ENCODE measurements at regions of chr2 and their contacts with region 1.

Region 1: DNA sequence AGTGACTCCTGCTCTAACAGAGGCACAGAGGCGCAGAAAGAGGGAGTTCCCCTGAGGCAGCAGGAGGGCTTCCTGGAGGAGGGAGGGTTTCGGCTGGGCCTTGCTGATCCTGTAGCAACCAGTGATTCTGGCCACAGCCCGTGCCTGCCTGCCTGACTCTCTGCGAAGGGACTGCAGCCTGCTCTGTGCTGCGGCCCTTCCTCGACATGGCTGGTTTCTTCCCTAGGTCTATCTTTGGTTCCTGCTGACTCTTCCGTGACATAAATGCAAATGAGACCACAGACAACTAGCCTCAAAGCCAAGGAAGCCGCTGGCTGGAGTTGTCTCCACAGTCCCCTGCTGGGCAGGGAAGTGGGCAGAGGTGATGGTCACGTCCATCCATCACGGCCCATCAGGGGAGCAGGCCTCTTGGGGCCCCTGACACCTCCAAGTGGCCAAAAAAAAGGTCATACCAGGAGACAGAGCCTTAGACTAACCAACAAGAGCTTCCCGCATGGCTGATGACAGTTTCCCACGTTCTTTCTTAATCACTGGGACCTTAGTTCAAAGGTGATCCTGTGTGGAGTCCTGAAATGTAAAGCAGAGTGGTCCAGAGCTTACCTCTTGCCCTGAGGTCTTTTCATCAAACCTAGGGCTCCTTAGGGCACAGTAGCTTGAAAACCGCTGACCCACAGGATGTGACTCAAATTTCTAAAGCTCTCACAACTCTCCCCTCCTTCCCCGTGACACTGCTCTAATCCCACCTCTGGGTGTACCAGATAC is 55.3 kb downstream of the HS1BP3 start:
- DNase-seq: peak; percentile 66
- ATAC-seq: no peak
- H3K4me3 ChIP-seq: no peak overlapping the region
- H3K27ac ChIP-seq: peak overlapping the region; percentile 97
- H3K4me1 ChIP-seq: peaks cover 98% of the 10 kb centered on the region
- H3K27me3 ChIP-seq: no peaks in the 10 kb centered on the region; a peak in 1 of 5 replicates
- CTCF ChIP-seq: no peak
- EP300 ChIP-seq: peak in 1 of 2 experiments; percentile 62; a peak in 1 of 4 replicates
- POLR2A ChIP-seq: peak in 1 of 2 experiments; percentile 4; a peak in 1 of 4 replicates
- RAD21 ChIP-seq: peak; percentile 33; the same call in 1 of the 2 replicates

Region 2: GRCh38 chr2:20164061-20164733 is 431.4 kb before region 1 on chr2:
- CTCF ChIA-PET with region 1: no interaction called
- POLR2A ChIA-PET with region 1: no interaction called
- in situ Hi-C with region 1: no loop called
- intact Hi-C with region 1: no loop called
- DNase-seq: no peak
- ATAC-seq: peak; percentile 70
- H3K4me3 ChIP-seq: no peak overlapping the region
- H3K27ac ChIP-seq: no peak overlapping the region
- H3K4me1 ChIP-seq: peaks cover 33% of the 10 kb centered on the region
- H3K27me3 ChIP-seq: 0 out of 5 replicates have a peak, but pooled peaks cover 0 to 1% of the 10 kb centered on the region in 2 experiments
- CTCF ChIP-seq: no peak
- EP300 ChIP-seq: no peak
- POLR2A ChIP-seq: no peak
- RAD21 ChIP-seq: no peak

Region 3: GRCh38 chr2:20507166-20507692 is 88.4 kb before region 1 on chr2:
- CTCF ChIA-PET with region 1: no interaction called
- POLR2A ChIA-PET with region 1: interaction called, 15 read pairs
- in situ Hi-C with region 1: no loop called
- intact Hi-C with region 1: no loop called
- DNase-seq: no peak
- ATAC-seq: peak; percentile 55
- H3K4me3 ChIP-seq: no peak overlapping the region
- H3K27ac ChIP-seq: peak overlapping the region; percentile 14
- H3K4me1 ChIP-seq: peaks cover 71% of the 10 kb centered on the region
- H3K27me3 ChIP-seq: no peaks in the 10 kb centered on the region
- CTCF ChIP-seq: no peak
- EP300 ChIP-seq: no peak
- POLR2A ChIP-seq: no peak
- RAD21 ChIP-seq: no peak

Region 4: GRCh38 chr2:20578895-20579825 is 16.5 kb before region 1 on chr2:
- CTCF ChIA-PET with region 1: interaction called, 4 read pairs
- POLR2A ChIA-PET with region 1: interaction called, 409 read pairs
- in situ Hi-C with region 1: no loop called
- intact Hi-C with region 1: loop called (anchors 1 kb)
- DNase-seq: peak; percentile 100
- ATAC-seq: peak; percentile 83
- H3K4me3 ChIP-seq: 0 out of 6 replicates have a peak overlapping the region, but pooled peaks of 1 of the 3 experiments have one; percentile 0
- H3K27ac ChIP-seq: peak overlapping the region; percentile 97
- H3K4me1 ChIP-seq: peaks cover 98% of the 10 kb centered on the region
- H3K27me3 ChIP-seq: no peaks in the 10 kb centered on the region
- CTCF ChIP-seq: peak; percentile 21; the same call in 1 of the 2 replicates
- EP300 ChIP-seq: peak; percentile 93 to 98
- POLR2A ChIP-seq: peak in 1 of 2 experiments; percentile 49; a peak in 1 of 4 replicates
- RAD21 ChIP-seq: peak; percentile 75

Region 5: GRCh38 chr2:20611077-20611843 is 15.6 kb after region 1 on chr2:
- CTCF ChIA-PET with region 1: no interaction called
- POLR2A ChIA-PET with region 1: interaction called, 78 read pairs
- in situ Hi-C with region 1: no loop called
- intact Hi-C with region 1: loop called (anchors 2 kb)
- DNase-seq: peak; percentile 100
- ATAC-seq: peak; percentile 94
- H3K4me3 ChIP-seq: peak overlapping the region in 1 of 3 experiments; percentile 35; a peak in 3 of 6 replicates
- H3K27ac ChIP-seq: peak overlapping the region; percentile 95
- H3K4me1 ChIP-seq: peaks cover 78% of the 10 kb centered on the region
- H3K27me3 ChIP-seq: no peaks in the 10 kb centered on the region
- CTCF ChIP-seq: peak; percentile 15; the same call in 1 of the 2 replicates
- EP300 ChIP-seq: peak; percentile 92 to 97
- POLR2A ChIP-seq: peak in 1 of 2 experiments; percentile 81; a peak in 2 of 4 replicates
- RAD21 ChIP-seq: peak; percentile 57

Region 6: GRCh38 chr2:20657522-20658235 is 62.1 kb after region 1 on chr2:
- CTCF ChIA-PET with region 1: no interaction called
- POLR2A ChIA-PET with region 1: no interaction called
- in situ Hi-C with region 1: no loop called
- intact Hi-C with region 1: no loop called
- DNase-seq: no peak
- ATAC-seq: no peak
- H3K4me3 ChIP-seq: no peak overlapping the region
- H3K27ac ChIP-seq: no peak overlapping the region
- H3K4me1 ChIP-seq: peaks cover 26% of the 10 kb centered on the region
- H3K27me3 ChIP-seq: peaks cover 11 to 46% of the 10 kb centered on the region in 2 experiments; a peak in 4 of 5 replicates
- CTCF ChIP-seq: no peak
- EP300 ChIP-seq: no peak
- POLR2A ChIP-seq: no peak
- RAD21 ChIP-seq: no peak

Region 7: DNA sequence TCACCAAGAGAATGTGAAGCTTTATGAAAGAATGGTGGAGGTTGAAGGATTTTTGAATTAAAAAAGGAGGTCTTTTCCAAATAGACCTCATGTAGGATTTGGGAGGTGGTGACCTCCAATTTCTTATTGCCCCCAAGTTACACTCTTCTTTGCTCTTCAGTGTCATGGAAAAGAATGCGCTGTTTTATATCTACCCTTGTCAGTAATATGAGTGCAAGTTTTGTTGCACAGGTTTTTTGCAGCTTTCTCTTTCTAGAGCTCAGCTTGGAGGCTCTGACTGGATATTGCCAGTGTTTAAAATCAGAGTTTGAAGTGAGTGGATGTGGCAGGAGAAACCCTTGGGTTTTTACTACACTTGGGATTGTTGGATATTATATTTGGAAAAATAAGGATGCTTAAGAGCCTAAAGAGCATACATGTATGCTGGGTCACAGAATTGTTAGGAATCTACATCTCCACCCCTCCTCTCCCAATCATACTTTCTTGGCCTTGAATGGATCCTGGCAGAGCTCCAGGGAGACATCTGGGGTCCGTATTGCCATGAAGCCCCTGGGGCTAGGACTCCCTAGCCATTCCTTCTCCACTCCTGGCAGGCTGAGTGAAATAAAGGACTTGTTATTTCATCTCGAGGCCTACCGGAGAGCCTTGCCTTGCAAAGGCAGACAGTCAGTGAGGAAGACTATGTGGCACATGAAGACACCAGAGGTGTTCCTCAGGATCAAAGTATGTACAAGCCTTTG is 404.5 kb after region 1 on chr2:
- CTCF ChIA-PET with region 1: no interaction called
- POLR2A ChIA-PET with region 1: no interaction called
- in situ Hi-C with region 1: no loop called
- intact Hi-C with region 1: loop called (anchors 10 kb)
- DNase-seq: no peak
- ATAC-seq: no peak
- H3K4me3 ChIP-seq: no peak overlapping the region
- H3K27ac ChIP-seq: no peak overlapping the region
- H3K4me1 ChIP-seq: peaks cover 13% of the 10 kb centered on the region; the same call in 1 of the 2 replicates
- H3K27me3 ChIP-seq: no peaks in the 10 kb centered on the region
- CTCF ChIP-seq: no peak
- EP300 ChIP-seq: 0 out of 4 replicates have a peak, but pooled peaks of 1 of the 2 experiments have one; percentile 6
- POLR2A ChIP-seq: peak; percentile 73 to 84
- RAD21 ChIP-seq: peak; percentile 35; the same call in 1 of the 2 replicates

Measured in HepG2 (cell line).